Activated CD4-positive, alpha-beta T cell treated with anti-CD3 and anti-CD28 coated beads, Interleukin-2, amount 10 ng/mL, durations not matched to agents 24 days and 14 days (primary cell): ENCODE measurements at regions of chr19 and their contacts with region 1.

Region 1: GRCh38 chr19:19192078-19192882 is at the starts of genes BORCS8 and RFXANK:
- DNase-seq: peak; percentile 100
- H3K4me3 Mint-ChIP-seq: peak within 1 kb of the TSS; percentile 99
- H3K27ac Mint-ChIP-seq: peak within 1 kb of the TSS; percentile 98
- H3K4me1 Mint-ChIP-seq: peaks cover 32% of the 10 kb centered on the region
- H3K27me3 Mint-ChIP-seq: no peaks in the 10 kb centered on the region
- total RNA-seq, gene BORCS8: 34.8 and 38.9 TPM in 2 replicates
- total RNA-seq, gene RFXANK: 111 and 113 TPM in 2 replicates

Region 2: GRCh38 chr19:19033426-19034203 is 158.7 kb before region 1 on chr19 and contains the starts of genes ARMC6 and SUGP2:
- intact Hi-C with region 1: loop called (anchors 1 kb)
- DNase-seq: peak; percentile 97
- H3K4me3 Mint-ChIP-seq: peak within 1 kb of the TSS; percentile 95
- H3K27ac Mint-ChIP-seq: peak within 1 kb of the TSS; percentile 96
- H3K4me1 Mint-ChIP-seq: peaks cover 32% of the 10 kb centered on the region
- H3K27me3 Mint-ChIP-seq: peaks cover 1% of the 10 kb centered on the region
- total RNA-seq, gene ARMC6: 57.7 and 61.9 TPM in 2 replicates
- total RNA-seq, gene SUGP2: 114 and 128 TPM in 2 replicates

Region 3: GRCh38 chr19:19203012-19203856 is 11.0 kb after region 1 on chr19 and contains the start of gene NR2C2AP:
- intact Hi-C with region 1: loop called (anchors 1 kb)
- DNase-seq: peak; percentile 98
- H3K4me3 Mint-ChIP-seq: peak within 1 kb of the TSS; percentile 95
- H3K27ac Mint-ChIP-seq: peak within 1 kb of the TSS; percentile 90
- H3K4me1 Mint-ChIP-seq: peaks cover 29% of the 10 kb centered on the region
- H3K27me3 Mint-ChIP-seq: no peaks in the 10 kb centered on the region
- total RNA-seq, gene NR2C2AP: 48.3 and 52.3 TPM in 2 replicates

Region 4: DNA sequence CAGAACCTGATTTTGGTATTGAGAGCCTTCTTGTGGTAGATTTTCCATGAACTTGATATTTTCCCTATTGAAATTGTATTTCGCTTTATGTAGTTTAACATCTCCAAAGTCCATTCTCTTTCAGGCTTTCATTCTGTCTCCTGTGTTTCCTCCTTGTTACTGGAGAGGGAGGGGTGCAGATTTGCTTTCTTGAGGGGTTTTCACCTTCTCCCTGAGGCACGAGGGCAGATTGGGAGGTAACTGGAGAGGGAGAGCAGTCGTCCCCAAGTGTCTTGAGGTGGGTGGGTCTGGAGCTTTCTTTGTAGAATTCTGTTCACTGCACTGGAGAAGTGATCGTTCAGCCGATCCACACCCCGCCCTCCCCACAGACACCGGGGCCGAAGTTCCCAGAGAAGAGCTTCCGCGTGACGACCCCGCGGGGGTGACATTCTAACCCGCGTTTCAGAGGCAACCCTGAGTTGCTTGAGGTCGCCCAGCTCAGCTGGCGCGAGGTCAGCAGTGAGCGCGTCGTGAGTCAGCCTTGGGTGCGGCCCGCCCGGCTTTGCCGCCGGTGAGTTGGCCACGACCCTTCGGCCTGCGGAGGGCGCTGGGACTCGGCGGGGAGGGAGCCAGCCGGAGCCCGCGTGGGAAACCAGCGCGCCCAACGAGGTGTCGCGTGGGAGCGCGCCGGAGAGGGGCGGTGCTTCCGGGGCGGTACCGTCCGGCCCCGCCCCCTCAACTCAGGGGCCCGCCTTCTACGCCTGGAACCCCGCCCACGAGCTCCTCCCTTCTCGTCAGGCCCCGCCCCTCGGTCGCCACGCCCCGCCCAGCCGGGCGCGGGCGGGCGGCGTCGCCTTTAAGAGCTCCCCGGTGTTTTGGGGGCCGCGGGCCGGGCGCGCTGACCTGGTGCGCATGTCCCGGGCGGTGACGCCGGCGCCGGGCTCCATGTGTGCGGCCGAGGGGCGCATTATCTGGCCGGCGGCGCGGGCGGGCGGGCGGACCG is 212.9 kb after region 1 on chr19 and contains the start of gene GATAD2A:
- intact Hi-C with region 1: loop called (anchors 5 kb)
- DNase-seq: peak; percentile 97
- H3K4me3 Mint-ChIP-seq: peak within 1 kb of the TSS; percentile 90
- H3K27ac Mint-ChIP-seq: peak within 1 kb of the TSS; percentile 93
- H3K4me1 Mint-ChIP-seq: peaks cover 55% of the 10 kb centered on the region
- H3K27me3 Mint-ChIP-seq: no peaks in the 10 kb centered on the region
- total RNA-seq, gene GATAD2A: 134 and 135 TPM in 2 replicates